CD4-positive, alpha-beta T cell (primary cell): ENCODE measurements at regions of chr15 and their contacts with region 1.

Region 1: DNA sequence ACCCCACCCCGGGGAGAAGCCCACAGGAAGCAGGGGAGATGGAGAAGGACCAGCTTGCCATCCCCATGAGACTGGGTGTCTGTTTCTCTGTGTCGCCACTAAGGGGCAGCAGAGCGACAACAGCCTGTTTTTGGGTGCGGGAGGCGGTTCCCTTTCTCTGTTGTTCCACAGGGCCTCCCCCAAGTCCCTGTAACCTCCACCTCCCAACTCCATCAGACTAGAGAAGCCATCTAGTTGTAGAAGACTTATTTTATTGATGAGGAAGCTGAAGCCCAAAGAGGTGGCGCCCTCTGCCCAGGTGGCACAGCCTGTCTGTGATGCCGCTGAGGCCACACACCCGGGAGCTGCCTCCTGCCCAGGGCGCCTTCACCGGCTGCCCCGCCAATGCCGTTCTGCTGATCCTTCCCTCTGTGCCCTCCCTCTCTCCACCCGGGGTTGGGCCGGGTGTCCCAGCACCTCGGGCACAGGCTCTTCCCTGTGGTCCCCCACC is 3.9 kb upstream of the CCDC9B start:
- DNase-seq: peak; percentile 46 to 83 (median 62)
- ATAC-seq: peak; percentile 97
- H3K4me3 ChIP-seq: no peak overlapping the region
- H3K4me3 Mint-ChIP-seq: no peak overlapping the region
- H3K27ac ChIP-seq: no peak overlapping the region
- H3K27ac Mint-ChIP-seq: no peak overlapping the region
- H3K4me1 ChIP-seq: peaks cover 11% of the 10 kb centered on the region
- H3K4me1 Mint-ChIP-seq: no peaks in the 10 kb centered on the region
- H3K27me3 ChIP-seq: no peaks in the 10 kb centered on the region
- H3K27me3 Mint-ChIP-seq: no peaks in the 10 kb centered on the region
- CTCF ChIP-seq: peak; percentile 81

Region 2: GRCh38 chr15:39728845-39729244 is 615.8 kb before region 1 on chr15:
- CTCF ChIA-PET with region 1: no interaction called
- POLR2A ChIA-PET with region 1: no interaction called
- intact Hi-C with region 1: no loop called
- DNase-seq: no peak
- ATAC-seq: no peak
- H3K4me3 ChIP-seq: no peak overlapping the region
- H3K4me3 Mint-ChIP-seq: no peak overlapping the region
- H3K27ac ChIP-seq: no peak overlapping the region
- H3K27ac Mint-ChIP-seq: no peak overlapping the region
- H3K4me1 ChIP-seq: no peaks in the 10 kb centered on the region
- H3K4me1 Mint-ChIP-seq: no peaks in the 10 kb centered on the region
- H3K27me3 ChIP-seq: no peaks in the 10 kb centered on the region
- H3K27me3 Mint-ChIP-seq: peaks cover 13% of the 10 kb centered on the region
- CTCF ChIP-seq: no peak

Region 3: GRCh38 chr15:40256638-40257235 is 87.9 kb before region 1 on chr15:
- CTCF ChIA-PET with region 1: no interaction called
- POLR2A ChIA-PET with region 1: no interaction called
- intact Hi-C with region 1: no loop called
- DNase-seq: peak in 3 of 14 experiments; percentile 41 to 64 (median 54)
- ATAC-seq: no peak
- H3K4me3 ChIP-seq: no peak overlapping the region
- H3K4me3 Mint-ChIP-seq: no peak overlapping the region
- H3K27ac ChIP-seq: no peak overlapping the region
- H3K27ac Mint-ChIP-seq: no peak overlapping the region
- H3K4me1 ChIP-seq: peaks cover 26% of the 10 kb centered on the region
- H3K4me1 Mint-ChIP-seq: peaks cover 5% of the 10 kb centered on the region
- H3K27me3 ChIP-seq: peaks cover 19 to 24% of the 10 kb centered on the region in 2 experiments
- H3K27me3 Mint-ChIP-seq: peaks cover 29% of the 10 kb centered on the region
- CTCF ChIP-seq: no peak

Region 4: GRCh38 chr15:40481341-40482074 is 136.8 kb after region 1 on chr15:
- CTCF ChIA-PET with region 1: no interaction called
- POLR2A ChIA-PET with region 1: no interaction called
- intact Hi-C with region 1: no loop called
- DNase-seq: no peak
- ATAC-seq: no peak
- H3K4me3 ChIP-seq: no peak overlapping the region
- H3K4me3 Mint-ChIP-seq: no peak overlapping the region
- H3K27ac ChIP-seq: no peak overlapping the region
- H3K27ac Mint-ChIP-seq: no peak overlapping the region
- H3K4me1 ChIP-seq: no peaks in the 10 kb centered on the region
- H3K4me1 Mint-ChIP-seq: no peaks in the 10 kb centered on the region
- H3K27me3 ChIP-seq: peaks cover 0 to 2% of the 10 kb centered on the region in 2 experiments
- H3K27me3 Mint-ChIP-seq: peaks cover 5% of the 10 kb centered on the region
- CTCF ChIP-seq: no peak

Region 5: DNA sequence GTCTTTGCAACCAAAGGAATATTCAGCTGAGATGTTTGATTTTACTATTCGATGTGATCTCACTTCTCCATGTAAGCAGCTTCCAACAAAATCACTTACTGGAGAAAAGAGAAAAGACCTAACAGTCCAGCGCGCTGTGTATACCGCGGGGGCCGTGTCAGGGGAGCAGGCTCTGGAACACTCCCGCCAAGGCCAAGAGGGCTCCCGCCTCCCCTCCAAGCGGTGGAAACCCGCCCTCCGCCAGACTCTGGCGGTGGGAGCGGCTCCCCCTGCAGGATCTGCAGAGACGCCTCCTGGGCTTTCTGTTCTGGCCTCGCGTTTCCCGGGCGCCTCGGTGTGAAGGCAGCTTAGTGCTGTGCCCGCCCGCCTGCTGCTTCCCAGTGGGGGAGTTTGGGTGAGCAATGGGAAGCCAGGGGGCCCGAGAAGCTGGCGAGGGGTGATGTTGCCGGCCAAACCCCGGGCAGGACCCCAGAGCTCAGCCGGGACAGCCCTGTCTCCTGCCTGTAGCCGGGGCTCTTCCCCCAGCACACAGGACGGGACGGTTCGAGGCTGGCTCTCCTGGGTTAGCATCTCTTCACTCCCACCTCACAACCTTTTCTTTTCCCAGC is 162.4 kb after region 1 on chr15:
- CTCF ChIA-PET with region 1: interaction called, 3 read pairs
- POLR2A ChIA-PET with region 1: no interaction called
- intact Hi-C with region 1: loop called in 1 of 2 experiments (anchors 1 kb)
- DNase-seq: peak; percentile 37 to 77 (median 60)
- ATAC-seq: peak; percentile 77
- H3K4me3 ChIP-seq: no peak overlapping the region
- H3K4me3 Mint-ChIP-seq: no peak overlapping the region
- H3K27ac ChIP-seq: no peak overlapping the region
- H3K27ac Mint-ChIP-seq: no peak overlapping the region
- H3K4me1 ChIP-seq: peaks cover 21% of the 10 kb centered on the region
- H3K4me1 Mint-ChIP-seq: peaks cover 27% of the 10 kb centered on the region
- H3K27me3 ChIP-seq: peaks cover 30 to 53% of the 10 kb centered on the region in 2 experiments
- H3K27me3 Mint-ChIP-seq: peaks cover 81% of the 10 kb centered on the region
- CTCF ChIP-seq: peak; percentile 70

Region 6: GRCh38 chr15:40722934-40723333 is 378.3 kb after region 1 on chr15:
- CTCF ChIA-PET with region 1: no interaction called
- POLR2A ChIA-PET with region 1: no interaction called
- intact Hi-C with region 1: no loop called
- DNase-seq: no peak
- ATAC-seq: no peak
- H3K4me3 ChIP-seq: no peak overlapping the region
- H3K4me3 Mint-ChIP-seq: no peak overlapping the region
- H3K27ac ChIP-seq: no peak overlapping the region
- H3K27ac Mint-ChIP-seq: no peak overlapping the region
- H3K4me1 ChIP-seq: no peaks in the 10 kb centered on the region
- H3K4me1 Mint-ChIP-seq: no peaks in the 10 kb centered on the region
- H3K27me3 ChIP-seq: no peaks in the 10 kb centered on the region
- H3K27me3 Mint-ChIP-seq: no peaks in the 10 kb centered on the region
- CTCF ChIP-seq: no peak